Thyroid gland (tissue), 4 donors: ENCODE measurements at regions of chr4 and their contacts with region 1.

Region 1: GRCh38 chr4:2934813-2935761 is 28.1 kb downstream of the NOP14 start:
- DNase-seq: peak; percentile 94 to 95
- H3K4me3 ChIP-seq: peak overlapping the region; percentile 67 to 93 (median 84)
- H3K27ac ChIP-seq: peak overlapping the region; percentile 65 to 88 (median 81)
- H3K4me1 ChIP-seq: peaks cover 43 to 56% of the 10 kb centered on the region in 2 donors
- H3K27me3 ChIP-seq: no peaks in the 10 kb centered on the region
- CTCF ChIP-seq: peak in 1 of 6 experiments; percentile 12
- POLR2A ChIP-seq: peak; percentile 51 to 95

Region 2: DNA sequence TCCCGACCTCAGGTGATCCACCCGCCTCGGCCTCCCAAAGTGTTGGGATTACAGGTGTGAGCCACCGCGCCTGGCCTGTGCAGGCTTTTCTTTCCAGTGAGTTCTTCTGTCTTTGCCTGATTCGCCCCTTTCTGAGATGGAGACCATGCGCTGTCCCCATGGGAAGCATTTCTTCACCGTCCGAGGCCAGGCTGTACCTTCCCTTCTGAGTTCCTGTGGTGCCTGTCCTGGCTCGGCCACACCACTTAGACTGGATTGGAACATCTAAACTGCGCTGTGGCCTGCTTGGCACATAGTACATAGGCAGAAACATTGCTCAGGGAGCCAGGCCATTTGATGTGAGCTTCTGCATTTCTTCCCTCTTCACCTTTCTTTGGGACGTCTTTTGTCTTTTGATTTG is 374.9 kb before region 1 on chr4:
- intact Hi-C with region 1: no loop called
- DNase-seq: no peak
- H3K4me3 ChIP-seq: no peak overlapping the region
- H3K27ac ChIP-seq: no peak overlapping the region
- H3K4me1 ChIP-seq: peaks cover 0 to 15% of the 10 kb centered on the region in 2 donors
- H3K27me3 ChIP-seq: no peaks in the 10 kb centered on the region
- CTCF ChIP-seq: no peak
- POLR2A ChIP-seq: no peak

Region 3: DNA sequence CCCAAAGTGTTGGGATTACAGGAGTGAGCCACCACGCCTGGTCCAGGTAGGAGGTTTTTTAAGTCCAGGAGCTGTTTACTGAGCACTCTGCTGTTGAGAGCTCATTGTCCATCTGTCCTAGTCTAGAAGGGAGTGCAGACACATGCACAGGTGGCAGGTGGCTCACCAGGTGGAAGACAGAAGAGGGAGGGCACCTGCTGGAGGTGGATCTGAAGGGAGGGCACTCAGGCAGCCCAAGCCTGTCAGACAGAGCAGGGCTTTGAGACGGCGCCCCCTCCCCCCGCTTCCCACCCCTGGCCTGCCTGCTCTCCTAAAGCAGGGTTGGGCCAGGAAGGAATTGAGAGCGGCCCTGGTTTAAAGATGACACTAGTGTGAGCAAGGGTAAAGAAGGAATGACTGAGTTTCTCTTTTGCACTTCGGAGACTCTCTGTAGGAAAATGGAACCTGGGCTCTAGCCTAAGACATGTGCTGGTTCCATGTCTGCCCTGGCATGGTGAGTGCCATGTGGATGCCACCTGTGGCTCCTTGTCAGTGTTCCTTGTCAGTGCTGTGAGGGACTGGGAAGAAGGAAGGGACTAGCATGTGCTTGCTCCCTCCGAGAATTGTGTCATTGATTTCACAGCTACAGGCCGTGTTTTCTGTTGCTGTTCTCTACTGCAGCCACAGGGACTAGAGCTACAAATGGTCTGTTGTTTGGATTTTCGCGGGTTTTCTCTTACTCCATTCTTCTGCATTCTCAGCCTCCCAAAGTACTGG is 287.5 kb before region 1 on chr4:
- intact Hi-C with region 1: no loop called
- DNase-seq: no peak
- H3K4me3 ChIP-seq: no peak overlapping the region
- H3K27ac ChIP-seq: no peak overlapping the region
- H3K4me1 ChIP-seq: no peaks in the 10 kb centered on the region
- H3K27me3 ChIP-seq: no peaks in the 10 kb centered on the region
- CTCF ChIP-seq: no peak
- POLR2A ChIP-seq: no peak

Region 4: GRCh38 chr4:2662598-2662997 is 272.5 kb before region 1 on chr4:
- intact Hi-C with region 1: no loop called
- DNase-seq: no peak
- H3K4me3 ChIP-seq: no peak overlapping the region
- H3K27ac ChIP-seq: no peak overlapping the region
- H3K4me1 ChIP-seq: no peaks in the 10 kb centered on the region
- H3K27me3 ChIP-seq: no peaks in the 10 kb centered on the region
- CTCF ChIP-seq: no peak
- POLR2A ChIP-seq: no peak

Region 5: DNA sequence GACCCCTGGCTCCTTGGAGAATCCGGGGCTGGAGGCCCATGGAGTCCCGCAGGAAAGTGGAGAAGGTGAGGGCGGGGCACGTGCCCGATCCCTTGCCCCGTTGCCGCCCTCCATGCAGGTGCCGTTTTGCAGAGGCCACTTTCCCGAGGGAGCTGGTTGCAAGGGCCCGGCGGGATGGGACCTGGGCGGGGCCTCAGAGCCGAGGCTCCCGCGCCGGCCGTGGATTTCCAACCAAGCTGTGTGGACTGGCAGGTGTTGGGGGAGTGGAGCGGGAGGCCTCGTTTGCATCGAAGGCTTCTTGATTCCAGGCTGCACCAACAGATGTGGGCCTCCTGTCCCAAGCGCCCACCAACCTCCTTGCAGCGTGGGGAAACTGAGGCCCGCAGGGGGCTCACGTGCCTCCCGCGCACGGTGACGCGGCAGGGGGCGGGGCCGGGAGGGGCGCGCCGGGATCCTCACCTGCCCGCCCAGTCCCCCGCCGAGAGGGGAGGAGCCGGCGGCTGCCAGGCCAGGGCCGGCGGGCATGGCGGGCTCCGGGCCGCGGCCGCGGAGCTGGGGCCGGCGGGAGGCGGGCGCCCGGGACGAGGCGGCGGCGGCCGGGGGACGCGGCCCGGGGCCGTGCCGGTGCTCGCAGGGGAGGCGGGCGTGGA is 117.3 kb before region 1 on chr4:
- intact Hi-C with region 1: no loop called
- DNase-seq: peak; percentile 65 to 68
- H3K4me3 ChIP-seq: peak overlapping the region; percentile 21 to 60 (median 44)
- H3K27ac ChIP-seq: no peak overlapping the region
- H3K4me1 ChIP-seq: peaks cover 13 to 25% of the 10 kb centered on the region in 2 donors
- H3K27me3 ChIP-seq: no peaks in the 10 kb centered on the region
- CTCF ChIP-seq: no peak
- POLR2A ChIP-seq: peak in 1 of 2 donors; percentile 54

Region 6: DNA sequence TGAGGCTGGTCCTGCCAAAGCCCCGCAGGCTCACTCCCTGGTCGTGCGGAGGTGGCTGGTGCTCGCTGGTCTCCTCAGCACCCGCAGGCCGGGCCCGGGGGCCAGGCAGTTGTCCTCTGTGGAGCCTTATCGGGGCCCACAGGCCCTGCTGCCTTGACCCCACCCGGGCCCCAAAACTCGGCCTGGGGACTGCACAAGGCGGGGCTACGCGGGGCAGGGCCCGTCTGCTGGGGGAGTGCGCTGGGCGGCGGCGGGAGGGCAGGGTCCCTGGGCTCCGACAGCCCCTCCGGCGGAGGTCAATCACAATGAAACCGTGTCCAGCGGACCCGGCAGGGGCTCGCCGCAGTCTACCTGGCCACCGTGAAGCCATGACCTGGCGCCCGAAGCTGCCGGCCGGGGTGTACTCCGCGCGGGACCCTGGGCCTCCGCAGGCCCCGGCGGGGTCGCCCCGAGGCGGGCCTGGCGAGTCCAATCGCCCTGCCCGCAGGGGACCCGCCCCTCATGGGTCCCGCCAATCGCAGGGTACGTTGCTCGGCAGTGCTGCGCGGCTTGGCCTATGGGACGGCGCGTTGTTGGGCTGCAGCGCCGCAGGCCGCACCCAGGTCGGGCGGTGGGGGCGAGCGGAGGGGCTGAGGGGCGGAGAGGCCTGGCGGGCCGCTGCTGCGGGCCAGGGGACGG is 91.7 kb before region 1 on chr4 and contains the start of gene ADD1:
- intact Hi-C with region 1: loop called (anchors 5 kb)
- DNase-seq: peak; percentile 90 to 91
- H3K4me3 ChIP-seq: peak within 1 kb of the TSS; percentile 30 to 93 (median 73)
- H3K27ac ChIP-seq: peak within 1 kb of the TSS; percentile 79 to 87 (median 84)
- H3K4me1 ChIP-seq: peaks cover 24 to 30% of the 10 kb centered on the region in 2 donors
- H3K27me3 ChIP-seq: no peaks in the 10 kb centered on the region
- CTCF ChIP-seq: no peak
- POLR2A ChIP-seq: peak; percentile 61 to 85
- total RNA-seq, gene ADD1: 190 to 222 (median 194) TPM